GM13977 (cell line): ENCODE measurements at regions of chr2 and their contacts with region 1.

Region 1: DNA sequence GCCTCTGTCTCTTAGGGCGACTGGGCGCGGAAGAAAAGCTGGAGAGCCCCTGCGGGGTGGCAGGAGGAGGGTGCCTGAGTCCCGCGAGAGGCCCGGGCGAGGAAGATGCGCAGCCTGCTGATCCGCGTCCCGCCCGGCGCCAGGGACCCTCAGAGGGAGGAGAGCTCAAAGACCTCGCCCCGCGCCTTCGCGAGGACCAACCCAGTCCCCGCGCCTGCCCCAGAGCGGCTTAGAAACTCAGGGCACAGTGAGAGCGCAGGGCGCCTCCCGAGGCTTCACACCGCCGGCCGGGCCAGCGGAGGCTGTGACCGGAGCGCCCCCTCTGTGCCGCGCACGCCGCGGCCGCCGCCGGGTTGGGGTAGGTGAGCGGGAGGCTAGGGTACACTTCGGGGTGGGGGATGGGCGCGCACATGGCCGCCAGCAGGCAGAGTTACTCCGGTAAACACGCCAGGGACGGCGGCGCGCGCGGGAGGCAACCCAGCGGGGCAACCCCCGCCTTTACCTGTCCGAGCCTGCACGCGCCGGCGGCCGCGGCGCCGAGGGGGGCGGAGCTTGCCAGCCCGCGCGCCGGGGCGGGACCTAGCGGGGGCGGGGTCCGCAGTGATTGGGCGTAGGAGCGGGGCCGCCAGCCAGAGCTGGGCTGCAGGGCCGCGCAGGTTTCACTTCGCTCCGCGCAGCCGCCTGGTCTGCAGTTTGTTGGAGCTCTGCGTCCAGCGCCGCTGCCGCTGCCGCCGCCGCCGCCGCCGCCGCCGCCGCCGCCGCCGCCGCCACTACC is at the start of gene BCL2L11:
- DNase-seq: peak; percentile 93
- CTCF ChIP-seq: peak; percentile 24

Region 2: DNA sequence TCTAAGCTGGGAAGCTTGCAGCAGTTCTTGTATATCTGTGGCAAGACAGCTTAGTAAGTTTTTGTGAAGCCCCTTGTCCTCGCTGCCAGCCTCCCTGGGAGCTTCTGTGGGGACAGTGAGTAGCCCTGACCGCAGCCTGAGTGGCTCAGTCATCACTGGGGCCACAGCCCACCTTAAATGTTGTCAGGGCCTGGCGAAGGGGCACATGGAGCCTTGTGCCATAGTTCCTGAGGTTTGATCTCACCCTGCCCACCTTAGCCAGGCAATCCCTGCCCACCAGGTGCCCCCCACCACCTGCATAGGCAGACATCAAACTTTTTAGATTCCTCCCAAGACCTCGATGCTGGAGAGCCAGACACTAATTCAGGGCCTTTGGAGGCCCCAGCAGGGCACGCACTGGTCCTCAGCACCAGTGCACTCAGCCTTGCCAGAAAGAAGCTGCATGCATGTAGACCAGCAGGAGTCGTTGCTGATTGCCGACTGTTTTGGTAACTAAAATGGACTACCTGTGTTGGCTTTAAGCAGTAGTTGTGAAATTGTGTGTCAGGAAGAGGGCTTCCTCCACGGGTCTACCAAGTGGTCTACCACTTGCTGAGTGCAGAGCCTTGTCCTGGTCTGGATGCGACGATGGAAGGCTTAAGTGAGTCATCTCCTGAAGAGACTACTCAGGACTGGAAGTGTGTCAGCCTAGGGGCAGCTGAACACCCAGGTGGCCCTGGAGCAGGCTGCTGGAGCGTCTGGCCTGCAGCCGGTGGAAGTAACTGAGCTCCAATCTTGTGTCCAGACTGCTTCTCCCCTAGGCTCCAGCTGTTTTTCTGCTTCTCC is 1739.7 kb before region 1 on chr2:
- in situ Hi-C with region 1: no loop called
- DNase-seq: no peak
- CTCF ChIP-seq: no peak

Region 3: GRCh38 chr2:110766291-110766690 is 354.1 kb before region 1 on chr2:
- in situ Hi-C with region 1: no loop called
- DNase-seq: no peak
- CTCF ChIP-seq: no peak

Region 4: DNA sequence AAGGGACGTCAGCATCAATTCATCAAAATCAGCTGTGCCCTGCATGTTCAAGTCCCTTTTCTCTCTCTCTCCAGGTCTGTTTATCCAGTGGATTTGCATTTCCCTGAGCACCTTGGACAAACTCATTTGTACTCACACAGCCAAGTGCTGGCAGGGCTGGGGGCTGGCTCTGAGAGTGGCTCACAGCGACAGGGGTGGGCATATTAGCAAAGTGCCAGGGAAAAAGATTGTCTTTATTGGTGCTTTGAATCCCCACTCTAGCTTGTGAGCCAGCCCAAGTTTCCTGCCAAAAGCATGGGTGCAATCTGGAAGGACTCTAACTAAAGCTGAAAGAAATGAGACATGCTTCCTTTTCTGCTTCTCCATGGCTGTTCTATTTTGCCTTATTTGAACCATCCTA is 331.5 kb before region 1 on chr2:
- in situ Hi-C with region 1: no loop called
- DNase-seq: no peak
- CTCF ChIP-seq: no peak

Region 5: DNA sequence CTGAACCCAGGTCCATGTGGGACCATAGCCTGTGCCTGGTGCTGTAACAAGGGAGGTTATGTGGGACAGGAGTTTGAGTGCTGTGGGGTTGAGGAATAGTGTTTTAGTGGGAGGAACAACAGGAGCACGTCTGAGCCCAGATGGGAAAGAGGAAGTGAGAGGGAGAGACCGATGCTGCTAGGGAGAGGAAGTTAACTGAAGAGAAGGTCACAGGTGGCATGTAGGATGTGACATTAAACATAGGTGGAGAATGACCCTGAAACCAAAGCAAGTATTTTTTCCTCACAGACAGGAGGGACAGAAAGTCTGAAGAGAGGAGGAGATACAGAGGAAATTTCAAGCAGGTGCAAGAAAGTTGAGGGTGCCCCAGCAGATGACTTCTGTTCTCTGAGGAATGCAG is 300.3 kb before region 1 on chr2:
- in situ Hi-C with region 1: loop called (anchors 10 kb)
- DNase-seq: no peak
- CTCF ChIP-seq: no peak

Region 6: GRCh38 chr2:110948027-110948674 is 172.3 kb before region 1 on chr2:
- in situ Hi-C with region 1: no loop called
- DNase-seq: no peak
- CTCF ChIP-seq: no peak

Region 7: GRCh38 chr2:111705711-111706336 is 585.4 kb after region 1 on chr2:
- in situ Hi-C with region 1: loop called (anchors 25 kb)
- DNase-seq: peak; percentile 72
- CTCF ChIP-seq: no peak